ENCODE measurements at regions of chr11 and their contacts with region 1.

Region 1: DNA sequence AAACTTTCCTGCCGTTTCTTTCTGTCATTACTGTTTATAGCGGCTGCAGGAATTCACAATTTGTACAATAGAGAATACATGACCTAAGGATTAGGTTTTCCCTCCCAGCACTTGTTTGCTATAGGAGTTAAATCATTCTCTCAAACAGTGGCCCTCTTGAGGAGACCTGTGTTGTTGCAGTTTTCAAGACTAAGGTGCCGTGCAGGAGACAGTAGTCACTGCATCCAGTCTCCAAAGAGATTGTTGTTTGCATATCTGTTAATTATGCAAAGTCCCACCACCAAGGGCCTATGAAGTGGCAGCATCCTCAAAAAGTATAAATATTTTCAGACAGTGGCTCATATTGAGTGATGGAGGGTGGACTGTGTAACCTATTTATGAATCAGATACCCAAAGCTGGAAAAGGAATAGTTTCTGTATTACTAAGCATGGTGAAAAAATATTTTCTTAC is 2.3 kb downstream of the PRSS23 start:
- DNase-seq: peak; percentile 80
- H3K4me3 ChIP-seq: peak overlapping the region; percentile 82 to 96 (median 95)
- H3K27ac ChIP-seq: peak overlapping the region; percentile 96
- H3K4me1 ChIP-seq: peaks cover 63% of the 10 kb centered on the region
- H3K27me3 ChIP-seq: no peaks in the 10 kb centered on the region
- CTCF ChIP-seq: peak; percentile 57 to 60
- POLR2A ChIP-seq: no peak

Region 2: GRCh38 chr11:86592659-86593451 is 209.8 kb before region 1 on chr11:
- CTCF ChIA-PET with region 1: no interaction called
- POLR2A ChIA-PET with region 1: no interaction called
- dilution Hi-C with region 1: no loop called
- intact Hi-C with region 1: loop called (anchors 5 kb)
- DNase-seq: peak; percentile 99
- H3K4me3 ChIP-seq: no peak overlapping the region
- H3K27ac ChIP-seq: peak overlapping the region; percentile 99
- H3K4me1 ChIP-seq: peaks cover 60% of the 10 kb centered on the region
- H3K27me3 ChIP-seq: no peaks in the 10 kb centered on the region
- CTCF ChIP-seq: no peak
- POLR2A ChIP-seq: peak; percentile 12

Region 3: GRCh38 chr11:86671682-86672621 is 130.7 kb before region 1 on chr11 and contains the start of gene ME3:
- CTCF ChIA-PET with region 1: interaction called, 16 read pairs
- POLR2A ChIA-PET with region 1: interaction called, 3 read pairs
- dilution Hi-C with region 1: no loop called
- intact Hi-C with region 1: loop called (anchors 1 kb)
- DNase-seq: peak; percentile 80
- H3K4me3 ChIP-seq: peak within 1 kb of the TSS; percentile 60 to 88 (median 85)
- H3K27ac ChIP-seq: peak within 1 kb of the TSS; percentile 91
- H3K4me1 ChIP-seq: peaks cover 31% of the 10 kb centered on the region
- H3K27me3 ChIP-seq: no peaks in the 10 kb centered on the region
- CTCF ChIP-seq: no peak
- POLR2A ChIP-seq: peak; percentile 80
- total RNA-seq, gene ME3: 26.9 and 27.2 TPM in 2 replicates

Region 4: DNA sequence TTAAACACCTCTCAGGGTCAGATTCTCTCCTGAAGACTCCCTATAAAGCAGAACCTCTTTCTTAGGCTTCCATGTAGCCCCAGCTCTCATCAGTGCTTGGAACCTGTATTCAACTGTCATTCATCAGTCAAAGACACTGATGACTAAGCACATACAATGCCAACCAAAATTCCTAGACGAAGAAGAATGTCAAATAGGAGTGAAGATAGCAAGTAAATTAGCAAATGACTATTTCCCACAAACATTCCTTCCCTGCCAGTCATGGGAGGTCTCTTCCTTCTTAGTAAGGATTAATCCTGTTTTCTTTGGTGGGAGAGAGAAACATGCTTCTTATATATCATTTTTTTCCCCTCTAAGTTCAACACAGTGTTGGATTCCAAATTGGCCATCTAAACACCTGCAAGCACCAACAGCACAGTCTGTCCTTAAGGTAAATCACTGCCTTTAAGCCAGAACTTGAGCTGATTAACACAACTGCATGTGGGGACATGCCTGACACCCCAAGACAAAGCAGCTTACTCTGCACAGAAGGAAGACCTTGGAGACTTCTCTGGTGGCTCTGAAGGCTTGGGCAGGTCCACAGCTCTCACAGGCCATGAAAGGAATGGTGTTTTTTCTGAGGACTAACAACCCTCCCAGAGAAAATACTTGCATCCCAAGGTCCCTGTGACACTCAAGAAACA is 82.7 kb before region 1 on chr11:
- CTCF ChIA-PET with region 1: interaction called, 5 read pairs
- POLR2A ChIA-PET with region 1: no interaction called
- dilution Hi-C with region 1: no loop called
- intact Hi-C with region 1: loop called (anchors 1 kb)
- DNase-seq: peak; percentile 87
- H3K4me3 ChIP-seq: no peak overlapping the region
- H3K27ac ChIP-seq: peak overlapping the region; percentile 87
- H3K4me1 ChIP-seq: peaks cover 31% of the 10 kb centered on the region
- H3K27me3 ChIP-seq: no peaks in the 10 kb centered on the region
- CTCF ChIP-seq: no peak
- POLR2A ChIP-seq: no peak

Region 5: GRCh38 chr11:86919557-86920210 is 117.1 kb after region 1 on chr11:
- CTCF ChIA-PET with region 1: no interaction called
- POLR2A ChIA-PET with region 1: no interaction called
- dilution Hi-C with region 1: no loop called
- intact Hi-C with region 1: loop called (anchors 5 kb)
- DNase-seq: peak; percentile 88
- H3K4me3 ChIP-seq: no peak overlapping the region
- H3K27ac ChIP-seq: peak overlapping the region; percentile 100
- H3K4me1 ChIP-seq: peaks cover 48% of the 10 kb centered on the region
- H3K27me3 ChIP-seq: no peaks in the 10 kb centered on the region
- CTCF ChIP-seq: peak; percentile 60
- POLR2A ChIP-seq: no peak